Activated CD4-positive, alpha-beta T cell treated with anti-CD3 and anti-CD28 coated beads for 36 hours (primary cell): ENCODE measurements at regions of chr5 and their contacts with region 1.

Region 1: GRCh38 chr5:137629646-137630045 is 106.2 kb downstream of the KLHL3 start:
- DNase-seq: no peak
- ATAC-seq: peak; percentile 69
- H3K4me3 Mint-ChIP-seq: no peak overlapping the region
- H3K27ac Mint-ChIP-seq: no peak overlapping the region
- H3K4me1 Mint-ChIP-seq: no peaks in the 10 kb centered on the region
- H3K27me3 Mint-ChIP-seq: no peaks in the 10 kb centered on the region

Region 2: GRCh38 chr5:137264573-137264972 is 365.1 kb before region 1 on chr5:
- CTCF ChIA-PET with region 1: no interaction called
- POLR2A ChIA-PET with region 1: no interaction called
- intact Hi-C with region 1: no loop called
- DNase-seq: no peak
- ATAC-seq: no peak
- H3K4me3 Mint-ChIP-seq: no peak overlapping the region
- H3K27ac Mint-ChIP-seq: no peak overlapping the region
- H3K4me1 Mint-ChIP-seq: no peaks in the 10 kb centered on the region
- H3K27me3 Mint-ChIP-seq: peaks cover 15% of the 10 kb centered on the region

Region 3: DNA sequence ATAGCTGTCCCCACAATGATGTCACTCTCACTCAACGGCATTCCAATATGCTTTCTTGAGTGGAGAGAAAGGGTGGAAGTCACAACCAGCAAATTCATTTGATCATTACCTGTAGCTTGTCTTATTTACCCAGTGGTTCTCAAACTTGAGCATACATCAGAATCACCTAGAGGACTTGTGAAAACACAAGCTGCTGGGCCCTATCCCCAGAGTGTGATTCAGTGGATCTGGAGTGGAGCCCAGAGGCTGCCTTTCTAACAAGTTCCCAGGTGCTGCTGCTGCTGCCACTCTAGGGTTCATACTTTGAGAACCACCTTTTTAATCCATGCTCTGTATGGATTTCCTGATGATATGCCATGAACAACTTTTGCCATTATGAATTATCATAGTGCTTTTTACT is 11.5 kb after region 1 on chr5:
- CTCF ChIA-PET with region 1: interaction called, 16 read pairs
- POLR2A ChIA-PET with region 1: no interaction called
- intact Hi-C with region 1: no loop called
- DNase-seq: no peak
- ATAC-seq: no peak
- H3K4me3 Mint-ChIP-seq: no peak overlapping the region
- H3K27ac Mint-ChIP-seq: no peak overlapping the region
- H3K4me1 Mint-ChIP-seq: no peaks in the 10 kb centered on the region
- H3K27me3 Mint-ChIP-seq: no peaks in the 10 kb centered on the region

Region 4: GRCh38 chr5:137730336-137730735 is 100.7 kb after region 1 on chr5:
- CTCF ChIA-PET with region 1: interaction called, 10 read pairs
- POLR2A ChIA-PET with region 1: no interaction called
- intact Hi-C with region 1: no loop called
- DNase-seq: no peak
- ATAC-seq: no peak
- H3K4me3 Mint-ChIP-seq: no peak overlapping the region
- H3K27ac Mint-ChIP-seq: no peak overlapping the region
- H3K4me1 Mint-ChIP-seq: peaks cover 9% of the 10 kb centered on the region
- H3K27me3 Mint-ChIP-seq: no peaks in the 10 kb centered on the region

Region 5: GRCh38 chr5:138065102-138065501 is 435.5 kb after region 1 on chr5:
- CTCF ChIA-PET with region 1: interaction called, 21 read pairs
- POLR2A ChIA-PET with region 1: no interaction called
- intact Hi-C with region 1: loop called (anchors 1 to 2 kb)
- DNase-seq: peak; percentile 40
- ATAC-seq: no peak
- H3K4me3 Mint-ChIP-seq: no peak overlapping the region
- H3K27ac Mint-ChIP-seq: no peak overlapping the region
- H3K4me1 Mint-ChIP-seq: peaks cover 4% of the 10 kb centered on the region
- H3K27me3 Mint-ChIP-seq: no peaks in the 10 kb centered on the region

Region 6: DNA sequence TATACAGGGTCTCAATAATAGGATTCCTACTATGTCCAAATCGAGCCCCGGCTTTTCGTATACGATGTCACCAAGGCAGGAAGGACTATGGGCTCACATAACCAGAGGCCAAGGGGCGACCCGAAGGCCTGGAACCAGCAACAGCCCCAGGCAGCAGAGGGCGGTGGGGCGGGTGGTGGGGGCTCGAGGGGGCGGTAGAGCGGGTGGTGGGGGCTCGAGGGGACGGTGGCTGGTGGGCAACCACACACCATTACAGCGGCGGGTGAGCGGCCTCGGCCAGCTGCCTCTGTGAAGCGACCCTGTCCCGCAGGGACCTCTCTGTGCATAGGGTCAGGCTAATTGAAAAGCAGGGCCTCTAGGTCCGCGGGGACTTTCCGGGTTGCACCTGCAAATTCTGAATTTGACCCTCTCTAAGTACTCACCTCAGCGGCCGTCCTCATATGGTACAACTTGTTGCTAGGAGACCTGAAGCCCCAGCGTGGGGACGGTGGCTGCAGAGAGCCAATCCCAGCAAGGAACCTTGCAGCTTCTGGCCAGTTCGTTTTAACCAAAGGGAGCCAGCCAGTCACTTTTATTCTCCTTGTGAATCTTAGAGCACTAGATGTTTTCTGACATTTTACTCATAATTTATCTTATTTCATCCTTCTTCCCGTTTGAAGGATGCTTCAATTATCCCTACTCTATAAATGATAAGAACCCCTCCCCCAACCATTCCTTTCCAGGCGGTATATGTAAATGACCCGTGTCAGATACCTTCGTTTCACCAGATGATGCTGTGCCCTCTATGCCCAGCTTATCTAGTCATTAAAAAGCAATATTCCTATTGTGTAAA is 509.5 kb after region 1 on chr5 and contains the start of gene NME5:
- CTCF ChIA-PET with region 1: no interaction called
- POLR2A ChIA-PET with region 1: no interaction called
- intact Hi-C with region 1: loop called in 1 of 2 experiments (anchors 10 kb)
- DNase-seq: peak; percentile 30
- ATAC-seq: peak; percentile 30
- H3K4me3 Mint-ChIP-seq: no peak within 1 kb of the TSS
- H3K27ac Mint-ChIP-seq: no peak within 1 kb of the TSS
- H3K4me1 Mint-ChIP-seq: peaks cover 3% of the 10 kb centered on the region
- H3K27me3 Mint-ChIP-seq: peaks cover 4% of the 10 kb centered on the region
- total RNA-seq, gene NME5: not detected